H1 (cell line): ENCODE measurements at regions of chr16 and their contacts with region 1.

Region 1: DNA sequence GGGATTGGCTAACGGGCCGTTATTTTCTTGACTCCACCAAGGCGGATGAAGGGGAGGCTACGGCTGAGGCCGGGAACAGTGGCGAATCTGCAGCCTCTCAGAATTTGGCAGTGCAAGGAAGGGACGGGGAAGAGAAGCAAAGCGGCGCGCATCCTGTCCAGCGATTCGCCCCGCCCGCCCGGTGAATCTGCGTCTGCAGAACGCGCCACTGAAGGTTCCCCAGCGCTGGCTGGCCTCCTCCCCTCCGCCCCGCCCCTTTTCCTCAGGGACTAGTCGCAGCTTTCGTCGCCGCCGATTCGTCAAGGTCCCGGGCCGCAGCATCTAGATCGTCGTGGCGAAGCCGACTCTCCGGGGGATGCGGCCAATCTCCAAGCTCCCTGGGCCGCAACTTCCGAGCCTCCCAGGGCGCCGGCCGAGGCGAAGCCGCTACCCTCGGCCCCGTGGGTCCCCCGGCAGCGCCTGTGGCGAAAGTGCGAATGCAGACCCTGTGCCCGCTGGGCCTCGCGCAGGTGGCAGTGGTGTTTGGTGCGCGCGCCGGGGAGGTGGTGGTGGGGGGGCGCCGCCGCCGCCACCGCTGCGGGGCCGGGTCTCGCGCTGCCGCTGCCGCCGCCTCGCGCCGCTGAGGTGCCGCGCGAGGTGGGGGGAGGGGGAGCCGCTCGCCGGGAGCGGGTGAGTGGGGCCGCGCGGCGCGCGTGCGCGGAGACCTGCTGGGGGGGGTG is at the start of gene SETD1A:
- DNase-seq: peak in 1 of 2 experiments; percentile 96
- H3K4me3 ChIP-seq: peak within 1 kb of the TSS; percentile 60 to 96 (median 90)
- H3K27ac ChIP-seq: peak within 1 kb of the TSS; percentile 100
- H3K4me1 ChIP-seq: peaks cover 0 to 9% (median 2%) of the 10 kb centered on the region in 4 experiments; a peak in 3 of 7 replicates
- H3K27me3 ChIP-seq: no peaks in the 10 kb centered on the region
- CTCF ChIP-seq: no peak
- EP300 ChIP-seq: peak in 1 of 2 experiments; percentile 98; a peak in 1 of 3 replicates
- POLR2A ChIP-seq: peak in 1 of 2 experiments; percentile 54; a peak in 1 of 3 replicates
- RAD21 ChIP-seq: no peak
- total RNA-seq, gene SETD1A: 29.0 and 29.6 TPM in 2 replicates

Region 2: DNA sequence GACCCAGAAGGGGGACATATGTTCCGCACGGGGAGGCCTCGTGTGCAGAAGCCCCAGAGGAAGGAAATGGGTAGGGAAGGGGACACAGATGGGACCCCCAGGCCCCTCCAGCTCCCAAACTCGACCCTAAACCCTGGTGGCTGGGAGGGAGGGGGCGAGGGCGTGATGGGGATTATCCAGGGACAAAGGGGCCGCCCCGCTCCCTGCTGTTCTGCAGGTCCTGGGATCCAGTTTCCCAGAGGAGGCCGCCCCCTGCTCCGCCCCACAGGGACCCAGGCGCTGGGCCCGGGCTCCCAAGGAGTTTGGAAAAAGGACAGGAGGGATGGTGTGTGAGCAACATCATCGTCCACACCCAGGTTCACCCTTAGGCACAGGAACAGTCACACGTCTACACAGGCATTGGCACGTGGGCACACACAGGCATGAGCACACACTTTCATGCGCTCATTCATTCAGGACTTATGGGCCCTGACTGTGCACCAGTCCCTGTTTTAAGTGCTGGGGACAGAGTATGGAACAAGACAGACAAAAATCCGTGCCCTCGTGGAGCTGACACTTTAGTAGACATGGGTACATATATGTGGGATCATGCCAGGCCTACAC is 47.1 kb before region 1 on chr16:
- CTCF ChIA-PET with region 1: no interaction called
- POLR2A ChIA-PET with region 1: no interaction called
- DNase-seq: peak in 1 of 2 experiments; percentile 65
- H3K4me3 ChIP-seq: no peak overlapping the region
- H3K27ac ChIP-seq: no peak overlapping the region
- H3K4me1 ChIP-seq: peaks cover 0 to 9% (median 7%) of the 10 kb centered on the region in 4 experiments; a peak in 6 of 7 replicates
- H3K27me3 ChIP-seq: no peaks in the 10 kb centered on the region
- CTCF ChIP-seq: no peak
- EP300 ChIP-seq: no peak
- POLR2A ChIP-seq: no peak
- RAD21 ChIP-seq: no peak

Region 3: GRCh38 chr16:30941600-30942425 is 15.8 kb before region 1 on chr16:
- CTCF ChIA-PET with region 1: interaction called, 25 read pairs
- POLR2A ChIA-PET with region 1: interaction called, 26 read pairs
- DNase-seq: peak in 1 of 2 experiments; percentile 87
- H3K4me3 ChIP-seq: 0 out of 8 replicates have a peak overlapping the region, but pooled peaks of 2 of the 4 experiments have one; percentile 1 to 10
- H3K27ac ChIP-seq: no peak overlapping the region
- H3K4me1 ChIP-seq: peaks cover 0 to 13% (median 8%) of the 10 kb centered on the region in 4 experiments; a peak in 6 of 7 replicates
- H3K27me3 ChIP-seq: no peaks in the 10 kb centered on the region
- CTCF ChIP-seq: peak; percentile 84 to 97 (median 93)
- EP300 ChIP-seq: no peak; a peak in 1 of 3 replicates
- POLR2A ChIP-seq: no peak
- RAD21 ChIP-seq: peak; percentile 74 to 83